Ascending aorta (tissue), 2 donors: ENCODE measurements at regions of chr13 and their contacts with region 1.

Region 1: DNA sequence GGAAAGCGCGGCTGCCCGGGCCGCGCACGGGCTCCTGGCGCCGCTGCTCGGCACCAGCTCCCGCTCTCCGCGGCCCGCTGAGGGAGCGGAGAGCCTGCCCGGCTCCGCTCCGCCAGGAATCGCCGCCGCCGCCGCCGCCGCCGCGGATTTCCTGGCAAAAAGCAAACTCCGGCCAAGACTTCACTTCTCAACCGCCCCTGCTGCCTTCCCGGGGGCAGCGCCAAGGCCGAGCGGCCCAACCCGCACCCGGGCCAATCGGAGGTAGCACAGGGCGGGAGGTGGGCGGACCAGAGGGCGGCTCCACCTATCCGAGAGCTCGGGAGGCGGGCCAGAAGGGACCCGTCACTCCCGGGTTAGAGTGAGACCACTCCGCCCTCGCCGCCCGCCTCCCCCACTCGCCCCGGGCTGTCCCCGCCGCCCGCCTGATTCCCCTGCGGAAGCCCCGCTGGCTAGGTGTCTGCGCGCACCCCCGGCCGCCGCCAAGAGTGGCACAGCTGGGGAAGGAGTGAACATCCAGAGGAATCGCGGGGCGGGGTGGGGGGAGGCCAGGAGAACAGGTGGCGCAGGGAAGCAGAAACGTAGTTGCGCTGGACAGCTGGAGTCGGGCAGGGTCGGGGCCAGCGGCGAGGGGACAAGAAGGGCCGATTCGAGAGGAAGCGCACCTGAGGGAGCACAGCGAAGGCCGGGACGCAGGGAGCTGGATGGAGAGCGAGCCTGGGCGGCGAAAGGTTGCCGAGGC is at the start of gene LNX2:
- DNase-seq: peak; percentile 95 to 99
- H3K4me3 ChIP-seq: peak within 1 kb of the TSS; percentile 72 to 95
- H3K27ac ChIP-seq: peak within 1 kb of the TSS; percentile 95 to 97
- H3K4me1 ChIP-seq: peaks cover 0 to 14% of the 10 kb centered on the region in 2 donors
- H3K27me3 ChIP-seq: no peaks in the 10 kb centered on the region
- CTCF ChIP-seq: no peak
- total RNA-seq, gene LNX2: 3.7 TPM

Region 2: GRCh38 chr13:26425443-26426358 is 1194.8 kb before region 1 on chr13:
- intact Hi-C with region 1: no loop called
- DNase-seq: no peak
- H3K4me3 ChIP-seq: no peak overlapping the region
- H3K27ac ChIP-seq: peak overlapping the region; percentile 47 to 86
- H3K4me1 ChIP-seq: peaks cover 0 to 11% of the 10 kb centered on the region in 2 donors
- H3K27me3 ChIP-seq: no peaks in the 10 kb centered on the region
- CTCF ChIP-seq: no peak

Region 3: GRCh38 chr13:27171827-27172494 is 448.6 kb before region 1 on chr13:
- intact Hi-C with region 1: loop called (anchors 10 kb)
- DNase-seq: peak; percentile 66 to 97
- H3K4me3 ChIP-seq: peak overlapping the region; percentile 86 to 90
- H3K27ac ChIP-seq: peak overlapping the region; percentile 89 to 99
- H3K4me1 ChIP-seq: peaks cover 9 to 22% of the 10 kb centered on the region in 2 donors
- H3K27me3 ChIP-seq: no peaks in the 10 kb centered on the region
- CTCF ChIP-seq: peak in 1 of 3 experiments; percentile 22

Region 4: DNA sequence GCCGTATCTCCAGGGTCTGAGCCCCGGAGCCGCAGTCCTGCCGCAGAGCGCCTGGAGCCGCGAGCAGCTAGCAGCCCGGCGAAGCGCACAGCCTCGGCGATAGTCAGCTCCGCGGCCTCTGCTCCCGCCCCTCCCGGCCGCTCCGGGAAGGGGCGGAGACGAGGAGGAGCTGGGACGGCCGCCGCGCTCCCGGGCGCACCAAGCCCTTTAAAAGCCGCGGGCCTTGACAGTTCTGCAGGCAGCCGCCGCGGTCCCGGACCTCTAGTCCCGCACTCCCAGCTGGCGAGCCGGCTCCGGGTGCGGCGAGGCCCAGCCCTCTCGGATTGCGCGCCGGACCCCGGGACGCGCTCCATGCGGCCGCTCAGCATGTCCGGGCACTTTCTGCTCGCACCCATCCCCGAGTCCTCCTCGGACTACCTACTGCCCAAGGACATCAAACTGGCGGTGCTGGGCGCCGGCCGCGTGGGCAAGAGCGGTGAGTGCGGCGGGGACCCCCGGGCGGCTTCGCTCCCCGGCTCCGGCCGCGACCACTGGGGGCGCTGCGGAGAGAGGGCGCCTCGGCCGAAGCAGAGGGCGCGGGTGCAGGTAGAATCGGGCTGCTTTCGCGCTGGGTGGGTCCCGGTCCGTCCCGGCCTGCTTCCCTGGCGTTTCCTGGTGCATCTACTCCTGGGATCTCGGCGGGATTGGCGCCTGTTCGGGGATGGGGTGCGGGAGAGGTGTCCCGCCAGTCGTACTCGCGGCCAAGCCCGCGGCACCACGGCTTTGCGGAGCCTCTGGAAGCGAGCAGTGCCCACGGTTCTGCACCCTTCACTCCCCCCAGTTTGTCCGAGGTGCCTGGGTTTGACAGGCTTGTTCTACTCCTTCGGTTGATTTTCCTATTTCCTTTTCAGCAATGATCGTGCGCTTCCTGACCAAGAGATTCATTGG is 349.7 kb before region 1 on chr13 and contains the start of gene RASL11A:
- intact Hi-C with region 1: loop called (anchors 5 kb)
- DNase-seq: peak; percentile 44 to 95
- H3K4me3 ChIP-seq: peak within 1 kb of the TSS; percentile 67 to 84
- H3K27ac ChIP-seq: peak within 1 kb of the TSS; percentile 91 to 93
- H3K4me1 ChIP-seq: peaks cover 4 to 30% of the 10 kb centered on the region in 2 donors
- H3K27me3 ChIP-seq: no peaks in the 10 kb centered on the region
- CTCF ChIP-seq: peak; percentile 91 to 98 (median 94)
- total RNA-seq, gene RASL11A: 50.4 TPM

Region 5: GRCh38 chr13:27321468-27322431 is 298.8 kb before region 1 on chr13:
- intact Hi-C with region 1: no loop called
- DNase-seq: no peak
- H3K4me3 ChIP-seq: no peak overlapping the region
- H3K27ac ChIP-seq: no peak overlapping the region
- H3K4me1 ChIP-seq: no peaks in the 10 kb centered on the region
- H3K27me3 ChIP-seq: no peaks in the 10 kb centered on the region
- CTCF ChIP-seq: no peak

Region 6: DNA sequence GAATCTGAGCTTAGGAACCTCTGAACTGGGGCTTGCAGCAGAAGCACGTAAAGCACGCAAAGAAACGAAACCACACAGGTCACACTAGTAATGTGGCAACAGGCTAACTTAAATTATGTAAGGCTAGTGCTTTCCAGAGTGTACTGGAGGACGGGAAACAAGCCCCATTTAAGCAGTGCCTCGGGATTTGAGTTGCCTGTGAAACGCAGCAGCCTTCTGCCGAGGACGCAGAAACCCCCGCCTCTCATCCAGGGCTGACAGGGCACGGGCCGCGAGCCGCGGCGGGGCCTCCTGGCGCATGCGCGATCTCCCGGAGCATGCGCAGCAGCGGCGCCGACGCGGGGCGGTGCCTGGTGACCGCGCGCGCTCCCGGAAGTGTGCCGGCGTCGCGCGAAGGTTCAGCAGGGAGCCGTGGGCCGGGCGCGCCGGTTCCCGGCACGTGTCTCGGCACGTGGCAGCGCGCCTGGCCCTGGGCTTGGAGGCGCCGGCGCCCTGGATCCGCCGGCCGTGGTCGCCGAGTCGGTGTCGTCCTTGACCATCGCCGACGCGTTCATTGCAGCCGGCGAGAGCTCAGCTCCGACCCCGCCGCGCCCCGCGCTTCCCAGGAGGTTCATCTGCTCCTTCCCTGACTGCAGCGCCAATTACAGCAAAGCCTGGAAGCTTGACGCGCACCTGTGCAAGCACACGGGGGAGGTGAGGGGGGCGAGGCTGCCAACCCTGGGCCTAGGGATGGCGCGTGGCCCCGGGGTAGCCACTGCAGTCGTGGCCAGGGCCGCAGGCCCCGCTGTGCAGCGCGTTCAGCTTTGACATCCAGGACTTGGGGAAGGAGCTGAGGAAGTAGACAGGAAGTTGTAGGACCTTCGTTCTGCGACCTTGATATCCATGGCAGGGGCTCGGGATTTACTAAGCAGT is 196.0 kb before region 1 on chr13 and contains the start of gene GTF3A:
- intact Hi-C with region 1: loop called (anchors 1 kb)
- DNase-seq: peak; percentile 37 to 87
- H3K4me3 ChIP-seq: peak within 1 kb of the TSS; percentile 82 to 94
- H3K27ac ChIP-seq: peak within 1 kb of the TSS; percentile 84 to 87
- H3K4me1 ChIP-seq: peaks cover 9 to 22% of the 10 kb centered on the region in 2 donors
- H3K27me3 ChIP-seq: no peaks in the 10 kb centered on the region
- CTCF ChIP-seq: no peak
- total RNA-seq, gene GTF3A: 197 TPM

Region 7: GRCh38 chr13:27607125-27607524 is 13.4 kb before region 1 on chr13:
- intact Hi-C with region 1: loop called (anchors 2 kb)
- DNase-seq: peak in 1 of 2 donors; percentile 74
- H3K4me3 ChIP-seq: no peak overlapping the region
- H3K27ac ChIP-seq: peak overlapping the region in 1 of 2 donors; percentile 41
- H3K4me1 ChIP-seq: peaks cover 0 to 22% of the 10 kb centered on the region in 2 donors
- H3K27me3 ChIP-seq: no peaks in the 10 kb centered on the region
- CTCF ChIP-seq: no peak

Region 8: DNA sequence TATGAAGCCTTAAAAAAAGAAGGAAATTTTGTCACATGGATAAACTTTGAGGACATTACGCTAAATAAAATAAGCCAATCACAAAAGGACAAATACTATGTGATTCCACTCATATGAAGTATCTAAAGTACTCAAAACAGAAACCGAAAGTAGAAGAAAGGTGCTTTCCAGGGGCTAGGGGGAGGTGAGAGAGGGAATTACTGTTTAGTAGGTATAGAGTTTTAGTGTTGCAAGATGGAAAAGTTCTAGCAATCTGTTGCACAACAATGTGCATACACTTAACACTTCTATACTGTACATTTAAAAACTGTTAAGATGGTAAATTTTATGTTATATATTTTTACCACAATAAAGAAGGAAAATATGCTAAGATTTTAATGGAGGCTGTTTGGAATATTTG is 84.1 kb after region 1 on chr13:
- intact Hi-C with region 1: no loop called
- DNase-seq: no peak
- H3K4me3 ChIP-seq: no peak overlapping the region
- H3K27ac ChIP-seq: no peak overlapping the region
- H3K4me1 ChIP-seq: no peaks in the 10 kb centered on the region
- H3K27me3 ChIP-seq: no peaks in the 10 kb centered on the region
- CTCF ChIP-seq: no peak

Region 9: DNA sequence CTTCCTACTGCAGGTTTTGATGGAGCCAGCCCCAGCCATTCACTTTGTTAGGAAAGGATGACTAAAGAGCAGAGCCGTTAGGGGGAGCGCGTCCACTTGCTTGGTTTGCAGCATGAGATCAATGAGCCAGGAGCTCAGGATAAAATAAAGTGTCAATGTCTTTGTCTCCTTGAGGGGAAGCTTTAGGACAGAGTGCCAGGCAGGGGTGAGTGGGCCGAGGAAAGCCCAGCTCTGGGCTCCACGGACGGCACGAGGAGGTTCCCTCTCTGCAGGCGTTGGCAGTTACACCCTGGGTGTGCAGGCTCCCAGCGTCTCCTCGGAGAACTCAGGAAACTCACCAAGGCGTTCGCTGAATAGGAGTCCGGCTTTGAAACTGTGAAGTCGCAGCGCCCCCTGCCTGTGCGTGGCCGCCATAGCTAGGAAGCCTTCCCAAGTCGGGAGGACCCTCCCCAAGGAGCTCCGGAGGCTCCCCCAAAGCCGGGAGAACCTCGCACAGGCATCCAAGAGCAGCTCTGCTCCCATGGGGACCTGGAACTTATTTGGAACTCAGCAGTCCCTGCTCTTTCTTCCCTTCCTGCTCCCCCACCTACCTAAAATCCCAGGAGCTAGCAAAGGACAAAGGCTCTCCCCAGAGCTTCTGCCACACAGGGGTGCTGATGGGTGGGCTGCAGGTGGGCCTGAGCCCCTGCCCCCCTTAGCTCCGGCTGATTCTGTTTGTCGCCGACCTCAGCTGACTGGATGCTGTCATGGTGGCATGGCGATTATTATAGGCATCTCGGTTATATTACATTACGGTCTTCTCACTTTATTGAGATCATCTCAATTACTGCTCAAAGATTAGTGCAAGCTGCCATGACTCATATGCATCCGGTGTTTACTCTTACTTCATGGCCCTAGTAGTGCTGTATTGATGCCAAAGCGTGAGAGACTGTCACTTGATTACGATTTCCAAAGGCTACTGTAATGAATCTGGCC is 206.1 kb after region 1 on chr13:
- intact Hi-C with region 1: no loop called
- DNase-seq: peak in 1 of 2 donors; percentile 87
- H3K4me3 ChIP-seq: peak overlapping the region in 1 of 2 donors; percentile 51
- H3K27ac ChIP-seq: no peak overlapping the region
- H3K4me1 ChIP-seq: peaks cover 0 to 5% of the 10 kb centered on the region in 2 donors
- H3K27me3 ChIP-seq: no peaks in the 10 kb centered on the region
- CTCF ChIP-seq: peak; percentile 77 to 92 (median 87)